HEK293T (cell line): ENCODE measurements at regions of chr1 and their contacts with region 1.

Region 1: DNA sequence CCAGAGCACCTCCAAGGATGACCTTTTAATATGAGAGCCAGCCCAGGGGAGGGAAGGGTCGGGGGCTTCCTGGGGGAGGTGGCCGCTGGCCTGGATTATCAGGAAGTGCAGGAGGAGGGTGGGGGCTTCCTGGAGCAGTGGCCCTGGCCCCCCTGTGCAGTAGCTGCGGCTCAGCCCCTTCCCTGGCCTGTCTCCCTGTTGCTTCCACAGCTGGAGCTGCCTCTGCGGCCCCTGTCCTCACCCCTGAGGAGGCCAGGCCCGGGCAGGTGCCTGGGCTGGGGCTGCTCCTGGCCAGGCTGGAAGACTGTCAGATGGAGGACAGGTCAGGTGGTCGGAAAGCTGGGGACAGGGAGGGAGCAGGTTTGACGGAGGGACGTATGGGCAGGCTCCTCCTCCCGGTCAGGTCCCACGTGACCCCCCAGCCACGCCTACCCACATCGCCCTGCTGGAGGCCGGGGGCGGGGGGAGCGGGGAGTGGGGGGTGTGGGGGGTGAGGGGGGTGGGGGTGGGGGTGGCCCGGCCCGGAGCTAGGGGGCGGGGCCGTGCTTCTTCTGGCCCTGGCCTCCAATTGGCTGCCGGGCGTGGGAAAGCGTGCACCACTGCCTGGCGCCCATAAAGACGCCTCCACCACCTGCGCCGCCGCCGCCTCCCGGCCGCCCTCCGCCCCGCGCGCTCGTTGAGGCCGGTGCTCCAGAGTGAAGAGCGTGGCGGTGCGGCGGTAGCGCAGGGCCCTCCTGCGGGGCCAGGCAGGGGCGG is 10.2 kb upstream of the TNFRSF14 start:
- DNase-seq: peak; percentile 93

Region 2: DNA sequence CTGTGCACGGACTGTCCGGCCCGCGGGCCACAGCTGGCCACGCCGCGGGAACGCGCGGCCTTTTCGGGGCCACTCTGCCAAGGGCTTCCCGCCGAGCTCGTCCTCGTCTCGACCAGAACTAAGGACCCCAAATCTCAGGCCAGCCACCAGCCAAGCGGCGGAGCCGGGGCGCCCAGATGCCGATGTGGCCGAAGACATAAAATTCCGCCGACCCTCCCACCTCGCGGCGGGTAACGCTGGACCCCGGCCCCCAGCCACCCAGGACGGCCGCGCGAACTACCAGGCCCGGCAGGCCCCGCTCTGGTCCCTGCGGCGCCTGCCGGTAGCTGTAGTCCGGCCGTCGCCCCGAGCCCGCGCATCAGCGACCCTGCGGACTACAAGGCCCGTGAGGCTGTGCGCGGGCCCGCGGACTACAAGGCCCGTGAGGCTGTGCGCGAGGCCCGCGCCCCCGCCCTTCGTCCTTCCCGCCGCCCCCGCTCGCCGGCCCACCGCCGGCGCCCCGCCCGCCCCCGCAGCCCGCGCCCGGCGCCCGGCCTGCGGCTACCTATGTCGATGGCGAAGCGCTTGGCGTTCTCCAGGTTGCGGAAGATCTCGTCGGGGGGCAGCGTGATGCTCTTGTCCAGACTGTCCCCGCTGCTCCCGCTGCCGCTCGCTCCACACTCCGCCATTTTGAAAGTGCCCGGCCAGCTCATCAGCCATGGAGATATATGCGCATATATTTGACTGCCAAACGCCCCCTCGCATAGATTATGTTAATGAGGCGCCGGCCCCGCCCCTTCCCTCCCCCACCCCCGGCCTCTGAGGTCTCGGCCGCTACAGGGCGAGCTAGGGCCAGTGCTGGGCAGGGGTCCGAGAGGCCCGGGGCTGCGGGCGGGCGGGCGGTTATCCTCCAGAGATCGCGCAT is 19.8 kb before region 1 on chr1 and contains the start of gene PANK4:
- CTCF ChIA-PET with region 1: no interaction called
- POLR2A ChIA-PET with region 1: interaction called, 74 read pairs
- DNase-seq: peak; percentile 91

Region 3: DNA sequence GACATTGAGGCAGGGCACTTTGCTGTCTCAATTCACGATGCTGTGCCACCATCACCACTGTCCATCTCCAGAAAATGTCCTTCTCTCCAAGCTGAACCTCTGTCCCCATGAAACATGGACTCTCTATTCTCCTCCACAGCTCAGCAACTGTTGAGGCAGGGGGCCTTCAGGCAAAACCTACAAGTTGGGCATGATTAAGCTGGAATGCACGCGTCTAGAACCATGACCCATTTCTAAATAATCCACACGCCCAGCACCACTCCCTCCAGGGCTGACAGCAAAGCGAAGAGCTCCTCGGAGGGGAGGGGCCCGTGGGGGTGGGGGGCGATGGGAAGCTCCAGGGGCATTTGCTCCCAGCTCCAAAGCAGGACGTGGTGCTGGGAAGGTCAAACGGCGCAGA is 12.6 kb before region 1 on chr1:
- CTCF ChIA-PET with region 1: no interaction called
- POLR2A ChIA-PET with region 1: interaction called, 74 read pairs
- DNase-seq: no peak